ENCODE measurements at regions of chr18 and their contacts with region 1.

Region 1: DNA sequence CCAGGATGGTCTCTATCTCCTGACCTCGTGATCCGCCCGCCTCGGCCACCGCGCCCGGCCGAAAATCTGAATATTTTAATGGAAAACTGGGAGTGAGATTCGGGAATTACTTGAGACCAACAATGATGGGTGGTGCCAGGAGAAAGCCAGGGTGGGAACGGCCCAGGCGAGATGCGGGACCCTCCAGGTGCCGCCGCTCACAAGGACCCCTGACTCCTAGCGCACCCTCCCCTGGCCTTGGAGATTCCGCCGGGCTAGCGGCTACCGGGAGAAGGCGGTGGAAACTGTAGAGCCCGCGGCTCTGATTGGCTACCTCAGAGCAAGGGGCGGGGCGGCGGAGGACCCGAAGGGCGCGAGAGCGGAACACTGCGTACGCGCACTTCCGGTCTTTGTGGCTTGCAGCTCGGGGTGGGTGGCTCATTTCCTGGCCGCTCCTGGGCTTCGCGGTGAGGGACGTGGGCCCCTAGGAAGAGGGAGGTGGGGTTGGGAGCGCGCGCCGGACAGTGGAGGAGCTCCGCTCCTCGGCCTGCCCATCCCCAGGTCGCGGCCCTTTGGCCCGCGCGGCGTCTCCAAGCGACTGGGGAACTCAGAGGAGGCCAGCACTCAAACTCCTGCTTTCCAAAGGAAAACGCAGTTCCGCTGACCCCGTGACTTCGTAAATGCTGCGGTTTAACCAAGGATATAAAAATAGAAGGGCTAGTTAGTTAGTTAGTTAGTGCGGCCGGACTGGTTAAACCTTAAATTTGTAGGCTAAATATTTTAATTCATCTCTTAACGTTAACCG is at the start of gene ZNF397:
- DNase-seq: peak; percentile 87
- H3K4me3 ChIP-seq: peak within 1 kb of the TSS; percentile 69
- H3K27ac ChIP-seq: peak within 1 kb of the TSS; percentile 96
- H3K27me3 ChIP-seq: no peaks in the 10 kb centered on the region
- CTCF ChIP-seq: no peak
- polyA plus RNA-seq, gene ZNF397: 9.7 and 11.0 TPM in 2 replicates

Region 2: DNA sequence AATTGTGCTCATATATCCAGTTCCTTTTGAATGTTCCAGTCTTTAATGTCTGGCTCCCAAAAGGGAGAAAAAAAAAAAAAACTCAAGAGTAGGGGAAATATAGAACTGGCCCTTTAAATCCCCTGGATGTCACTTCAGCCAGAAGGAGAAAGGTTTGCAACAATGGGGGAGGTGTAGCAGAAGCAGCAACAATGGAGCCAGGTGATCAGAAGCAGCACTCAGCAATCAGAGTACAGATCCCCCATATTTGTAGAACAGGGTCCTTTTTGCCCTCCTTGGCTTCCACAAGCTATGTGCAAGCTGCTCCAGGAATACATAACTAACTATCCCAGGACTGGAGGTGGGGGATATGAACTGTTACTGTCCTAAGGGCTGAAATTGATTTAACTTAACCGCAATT is 25.8 kb before region 1 on chr18:
- CTCF ChIA-PET with region 1: no interaction called
- POLR2A ChIA-PET with region 1: no interaction called
- DNase-seq: no peak
- H3K4me3 ChIP-seq: no peak overlapping the region
- H3K27ac ChIP-seq: no peak overlapping the region
- H3K27me3 ChIP-seq: peaks cover 5% of the 10 kb centered on the region
- CTCF ChIP-seq: no peak

Region 3: GRCh38 chr18:35290073-35290735 is 49.3 kb after region 1 on chr18 and contains the start of gene ZSCAN30:
- CTCF ChIA-PET with region 1: no interaction called
- POLR2A ChIA-PET with region 1: interaction called, 12 read pairs
- DNase-seq: peak; percentile 86
- H3K4me3 ChIP-seq: peak within 1 kb of the TSS; percentile 89
- H3K27ac ChIP-seq: peak within 1 kb of the TSS; percentile 69
- H3K27me3 ChIP-seq: no peaks in the 10 kb centered on the region
- CTCF ChIP-seq: no peak
- polyA plus RNA-seq, gene ZSCAN30: 14.4 and 14.5 TPM in 2 replicates

Measured in AG04450 (cell line).